ENCODE measurements at regions of chr4 and their contacts with region 1.

Region 1: GRCh38 chr4:89164400-89164799 is 53.1 kb downstream of the TIGD2 start:
- DNase-seq: no peak
- H3K4me3 ChIP-seq: no peak overlapping the region
- H3K27ac ChIP-seq: no peak overlapping the region
- H3K4me1 ChIP-seq: no peaks in the 10 kb centered on the region
- H3K27me3 ChIP-seq: no peaks in the 10 kb centered on the region
- CTCF ChIP-seq: no peak
- EP300 ChIP-seq: no peak
- POLR2A ChIP-seq: no peak

Region 2: DNA sequence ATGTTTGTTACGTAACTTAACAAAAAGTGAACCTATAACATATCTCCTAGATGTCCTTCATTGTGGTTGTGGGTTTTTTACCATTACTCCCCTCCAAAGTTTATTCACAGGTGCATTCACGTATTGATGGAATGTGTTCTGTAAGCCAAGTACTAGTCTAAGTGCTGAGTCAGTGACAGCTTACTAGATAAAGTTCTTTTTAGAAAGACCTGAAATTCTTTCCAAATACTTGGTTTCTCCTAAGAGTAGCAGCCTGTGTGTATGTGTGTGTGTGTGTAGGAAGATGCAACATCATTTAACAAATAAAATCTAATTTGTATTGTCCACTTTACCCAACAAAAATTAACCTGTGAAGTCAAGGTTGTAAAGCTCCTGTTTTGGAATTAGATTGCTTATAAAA is 488.9 kb before region 1 on chr4:
- intact Hi-C with region 1: no loop called
- DNase-seq: no peak
- H3K4me3 ChIP-seq: no peak overlapping the region
- H3K27ac ChIP-seq: no peak overlapping the region
- H3K4me1 ChIP-seq: no peaks in the 10 kb centered on the region
- H3K27me3 ChIP-seq: no peaks in the 10 kb centered on the region
- CTCF ChIP-seq: no peak
- EP300 ChIP-seq: no peak
- POLR2A ChIP-seq: peak in 1 of 2 donors; percentile 12

Region 3: GRCh38 chr4:89110986-89111832 is 53.2 kb before region 1 on chr4 and contains the start of gene TIGD2:
- intact Hi-C with region 1: no loop called
- DNase-seq: peak; percentile 93
- H3K4me3 ChIP-seq: peak within 1 kb of the TSS; percentile 82 to 95 (median 90)
- H3K27ac ChIP-seq: peak within 1 kb of the TSS; percentile 82 to 87 (median 84)
- H3K4me1 ChIP-seq: peaks cover 0 to 20% (median 12%) of the 10 kb centered on the region in 4 donors
- H3K27me3 ChIP-seq: no peaks in the 10 kb centered on the region
- CTCF ChIP-seq: peak; percentile 77 to 83 (median 81)
- EP300 ChIP-seq: peak in 1 of 4 donors; percentile 16
- POLR2A ChIP-seq: peak in 1 of 2 donors; percentile 41
- total RNA-seq, gene TIGD2: 1.4 to 2.6 (median 1.5) TPM

Region 4: DNA sequence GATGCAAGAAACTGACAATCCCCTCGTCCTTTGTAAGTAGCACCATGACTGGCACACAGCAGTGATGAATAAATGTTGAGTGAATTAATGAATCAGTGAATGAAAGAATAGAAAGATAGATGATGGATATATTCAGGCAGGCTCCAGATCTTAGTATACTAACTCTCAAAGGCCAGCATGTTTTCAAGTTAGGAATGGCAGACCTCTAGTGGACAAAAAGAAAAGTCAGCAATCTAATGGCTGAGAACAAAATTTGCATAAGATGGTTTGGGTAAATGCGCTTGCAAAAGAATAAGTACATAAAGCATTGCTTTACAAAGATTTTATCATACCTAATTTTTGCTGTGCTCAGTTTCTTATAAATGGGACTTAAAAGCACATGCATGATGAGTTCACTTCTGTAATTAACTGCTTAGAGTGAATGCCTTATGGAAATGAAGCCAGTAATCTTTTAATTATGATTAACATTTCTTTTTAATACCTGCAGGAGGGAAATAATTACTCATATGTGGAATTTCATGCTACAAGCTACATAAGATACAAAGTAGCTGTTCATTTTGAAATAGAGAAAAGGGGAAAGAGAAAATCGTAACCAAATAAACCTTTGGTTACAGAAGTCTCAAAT is 270.1 kb after region 1 on chr4:
- intact Hi-C with region 1: loop called (anchors 5 kb)
- DNase-seq: no peak
- H3K4me3 ChIP-seq: no peak overlapping the region
- H3K27ac ChIP-seq: no peak overlapping the region
- H3K4me1 ChIP-seq: no peaks in the 10 kb centered on the region
- H3K27me3 ChIP-seq: no peaks in the 10 kb centered on the region
- CTCF ChIP-seq: peak in 3 of 4 experiments; percentile 41 to 55 (median 49)
- EP300 ChIP-seq: no peak
- POLR2A ChIP-seq: no peak

Measured in sigmoid colon (tissue), 7 donors.